GM13977 (cell line): ENCODE measurements at regions of chr5 and their contacts with region 1.

Region 1: GRCh38 chr5:81851481-81852178 is 100.7 kb upstream of the SSBP2 start:
- DNase-seq: peak; percentile 85
- CTCF ChIP-seq: no peak

Region 2: DNA sequence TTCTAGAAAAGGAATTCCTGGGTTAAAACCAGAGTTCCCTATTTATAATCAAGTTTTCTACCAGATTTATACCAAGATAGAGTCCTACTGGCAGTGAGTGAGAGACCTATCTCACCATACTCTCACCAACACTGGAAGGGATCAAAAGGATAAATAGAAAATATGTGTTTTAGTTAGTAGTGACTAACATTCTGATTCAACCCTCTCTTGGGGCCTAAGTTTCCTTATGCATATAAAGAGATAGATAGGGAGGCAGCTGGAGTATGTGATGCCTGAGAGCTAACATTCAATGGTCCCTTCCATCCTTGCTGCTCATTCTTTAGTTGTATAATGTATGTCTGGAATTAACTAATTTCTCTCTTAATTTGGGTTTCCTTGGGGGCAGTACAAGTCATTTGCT is 586.5 kb before region 1 on chr5:
- in situ Hi-C with region 1: no loop called
- DNase-seq: no peak
- CTCF ChIP-seq: no peak

Region 3: GRCh38 chr5:81488862-81489261 is 362.8 kb before region 1 on chr5:
- in situ Hi-C with region 1: no loop called
- DNase-seq: no peak
- CTCF ChIP-seq: no peak

Region 4: DNA sequence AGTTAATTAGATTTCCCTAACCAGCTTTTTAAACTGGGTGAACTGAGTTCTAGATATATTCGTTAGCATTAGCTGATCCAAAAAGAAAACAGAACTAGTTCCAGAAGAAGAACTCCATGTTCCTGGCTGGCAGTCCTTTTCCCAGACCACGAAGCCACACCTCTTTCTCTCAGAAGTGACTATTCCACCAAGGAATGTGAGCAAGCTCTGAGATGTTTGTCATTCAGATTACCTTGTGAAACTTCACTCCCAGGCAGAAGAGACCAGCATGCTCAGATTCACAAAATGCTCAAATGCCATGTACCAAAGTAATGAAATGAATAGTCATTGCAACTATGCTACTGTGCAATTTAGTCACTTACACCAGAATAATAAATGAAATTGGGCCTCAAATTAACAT is 96.3 kb before region 1 on chr5:
- in situ Hi-C with region 1: loop called (anchors 5 kb)
- DNase-seq: no peak
- CTCF ChIP-seq: no peak